WTC11 (cell line): ENCODE measurements at regions of chr12 and their contacts with region 1.

Region 1: GRCh38 chr12:52390739-52391617 is 5.5 kb upstream of the KRT84 start:
- DNase-seq: peak; percentile 70
- ATAC-seq: peak; percentile 57
- H3K4me3 Mint-ChIP-seq: no peak overlapping the region
- H3K27ac Mint-ChIP-seq: no peak overlapping the region
- H3K4me1 Mint-ChIP-seq: peaks cover 4% of the 10 kb centered on the region; the same call in 1 of the 2 replicates
- H3K27me3 Mint-ChIP-seq: peaks cover 4% of the 10 kb centered on the region; the same call in 1 of the 2 replicates
- CTCF ChIP-seq: 0 out of 2 replicates have a peak, but pooled peaks have one; percentile 38

Region 2: GRCh38 chr12:52327052-52327829 is 63.7 kb before region 1 on chr12:
- CTCF ChIA-PET with region 1: interaction called, 10 read pairs
- POLR2A ChIA-PET with region 1: no interaction called
- DNase-seq: peak; percentile 78
- ATAC-seq: peak; percentile 98
- H3K4me3 Mint-ChIP-seq: no peak overlapping the region
- H3K27ac Mint-ChIP-seq: no peak overlapping the region
- H3K4me1 Mint-ChIP-seq: peaks cover 4% of the 10 kb centered on the region; the same call in 1 of the 2 replicates
- H3K27me3 Mint-ChIP-seq: no peaks in the 10 kb centered on the region; the same call in 1 of the 2 replicates
- CTCF ChIP-seq: peak; percentile 26; the same call in 1 of the 2 replicates

Region 3: DNA sequence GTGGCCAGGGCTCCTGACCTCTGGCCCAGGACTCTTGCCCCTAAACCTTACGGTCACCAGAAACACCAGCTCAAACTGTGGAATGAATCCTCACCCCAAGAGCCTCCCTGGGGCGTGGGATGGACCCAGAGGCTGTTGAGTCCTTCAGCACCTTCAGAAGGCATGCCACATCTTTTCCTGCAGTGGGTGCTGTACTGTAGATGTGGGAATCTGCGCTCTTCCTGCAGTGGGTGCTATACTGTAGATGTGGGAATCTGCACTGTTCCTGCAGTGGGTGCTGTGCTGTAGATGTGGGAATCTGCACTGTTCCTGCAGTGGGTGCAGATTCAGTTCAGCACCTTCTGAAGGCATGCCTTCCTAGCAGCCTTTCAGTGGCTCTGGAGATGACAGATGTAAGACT is 14.0 kb after region 1 on chr12:
- CTCF ChIA-PET with region 1: interaction called, 10 read pairs
- POLR2A ChIA-PET with region 1: no interaction called
- DNase-seq: no peak
- ATAC-seq: no peak
- H3K4me3 Mint-ChIP-seq: no peak overlapping the region
- H3K27ac Mint-ChIP-seq: no peak overlapping the region
- H3K4me1 Mint-ChIP-seq: peaks cover 9% of the 10 kb centered on the region
- H3K27me3 Mint-ChIP-seq: no peaks in the 10 kb centered on the region; the same call in 1 of the 2 replicates
- CTCF ChIP-seq: no peak

Region 4: GRCh38 chr12:52461691-52462090 is 70.7 kb after region 1 on chr12:
- CTCF ChIA-PET with region 1: interaction called, 12 read pairs
- POLR2A ChIA-PET with region 1: no interaction called
- DNase-seq: no peak
- ATAC-seq: no peak; the same call in 1 of the 2 replicates
- H3K4me3 Mint-ChIP-seq: no peak overlapping the region
- H3K27ac Mint-ChIP-seq: no peak overlapping the region
- H3K4me1 Mint-ChIP-seq: no peaks in the 10 kb centered on the region
- H3K27me3 Mint-ChIP-seq: no peaks in the 10 kb centered on the region; the same call in 1 of the 2 replicates
- CTCF ChIP-seq: no peak

Region 5: GRCh38 chr12:52522346-52523011 is 131.5 kb after region 1 on chr12:
- CTCF ChIA-PET with region 1: interaction called, 24 read pairs
- POLR2A ChIA-PET with region 1: no interaction called
- DNase-seq: no peak
- ATAC-seq: no peak
- H3K4me3 Mint-ChIP-seq: no peak overlapping the region
- H3K27ac Mint-ChIP-seq: peak overlapping the region; percentile 36; the same call in 1 of the 2 replicates
- H3K4me1 Mint-ChIP-seq: peaks cover 7% of the 10 kb centered on the region
- H3K27me3 Mint-ChIP-seq: no peaks in the 10 kb centered on the region
- CTCF ChIP-seq: no peak

Region 6: GRCh38 chr12:52561880-52562449 is 171.0 kb after region 1 on chr12:
- CTCF ChIA-PET with region 1: interaction called, 24 read pairs
- POLR2A ChIA-PET with region 1: no interaction called
- DNase-seq: no peak
- ATAC-seq: 0 out of 2 replicates have a peak, but pooled peaks have one; percentile 22
- H3K4me3 Mint-ChIP-seq: no peak overlapping the region
- H3K27ac Mint-ChIP-seq: no peak overlapping the region
- H3K4me1 Mint-ChIP-seq: no peaks in the 10 kb centered on the region
- H3K27me3 Mint-ChIP-seq: no peaks in the 10 kb centered on the region; the same call in 1 of the 2 replicates
- CTCF ChIP-seq: no peak

Region 7: GRCh38 chr12:52980693-52981423 is 589.9 kb after region 1 on chr12:
- CTCF ChIA-PET with region 1: interaction called, 15 read pairs
- POLR2A ChIA-PET with region 1: no interaction called
- DNase-seq: peak; percentile 92
- ATAC-seq: peak; percentile 86
- H3K4me3 Mint-ChIP-seq: no peak overlapping the region
- H3K27ac Mint-ChIP-seq: no peak overlapping the region
- H3K4me1 Mint-ChIP-seq: peaks cover 13% of the 10 kb centered on the region
- H3K27me3 Mint-ChIP-seq: no peaks in the 10 kb centered on the region; the same call in 1 of the 2 replicates
- CTCF ChIP-seq: peak; percentile 97